ENCODE measurements at regions of chr4 and their contacts with region 1.

Region 1: DNA sequence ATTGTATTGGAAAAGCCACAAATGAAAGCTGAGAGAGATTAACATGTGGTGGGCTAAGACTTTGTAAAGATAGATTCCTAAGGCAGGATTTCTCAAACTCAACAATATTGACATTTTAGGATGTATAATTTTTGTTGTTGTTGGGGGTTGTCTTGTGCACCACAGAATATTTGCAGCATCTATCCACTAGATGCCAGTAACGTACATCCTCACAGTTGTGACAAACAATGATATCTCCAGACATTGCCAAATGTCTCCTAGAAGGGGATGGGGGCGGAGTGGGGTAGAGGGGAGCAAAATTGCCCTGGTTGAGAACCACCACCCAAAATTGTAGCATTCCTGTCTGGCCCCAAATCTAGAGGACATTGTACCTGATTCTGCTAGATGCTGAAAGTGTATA is 14.7 kb upstream of the CBR4 start:
- DNase-seq: peak; percentile 68
- ATAC-seq: peak; percentile 84
- H3K4me3 ChIP-seq: no peak overlapping the region
- H3K27ac ChIP-seq: no peak overlapping the region
- H3K4me1 ChIP-seq: peaks cover 7% of the 10 kb centered on the region; the same call in 1 of the 2 replicates
- H3K27me3 ChIP-seq: no peaks in the 10 kb centered on the region
- CTCF ChIP-seq: peak; percentile 78

Region 2: GRCh38 chr4:169069972-169070902 is 45.5 kb after region 1 on chr4:
- CTCF ChIA-PET with region 1: no interaction called
- POLR2A ChIA-PET with region 1: no interaction called
- intact Hi-C with region 1: loop called (anchors 5 kb)
- DNase-seq: peak; percentile 97
- ATAC-seq: peak; percentile 88
- H3K4me3 ChIP-seq: peak overlapping the region; percentile 47
- H3K27ac ChIP-seq: peak overlapping the region; percentile 99
- H3K4me1 ChIP-seq: peaks cover 32% of the 10 kb centered on the region
- H3K27me3 ChIP-seq: no peaks in the 10 kb centered on the region
- CTCF ChIP-seq: no peak

Region 3: DNA sequence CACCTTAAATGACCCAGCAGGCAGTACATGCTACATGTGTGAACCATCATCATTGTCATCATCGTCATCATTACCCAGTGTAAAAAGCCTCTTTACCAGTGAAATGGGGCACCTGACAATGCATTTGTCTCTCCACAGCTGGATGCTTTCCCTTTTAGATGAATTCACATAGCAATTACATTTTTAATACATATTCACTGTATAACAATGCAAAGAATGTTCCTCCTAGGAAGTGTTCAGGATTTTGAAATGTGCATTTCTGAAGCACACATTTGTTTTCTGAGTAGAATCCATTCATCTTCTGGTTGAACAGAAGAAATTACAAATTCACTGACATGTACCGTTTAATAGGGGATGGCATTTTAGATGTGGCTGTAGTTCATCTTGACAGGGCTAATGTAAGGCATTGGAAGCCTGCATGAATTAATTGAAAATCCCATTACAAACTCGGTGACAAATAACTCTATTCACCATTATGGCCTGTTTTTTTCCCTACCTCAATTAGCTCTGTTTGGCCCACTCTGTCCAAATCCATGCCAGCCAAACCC is 134.9 kb after region 1 on chr4:
- CTCF ChIA-PET with region 1: no interaction called
- POLR2A ChIA-PET with region 1: interaction called, 15 read pairs
- intact Hi-C with region 1: no loop called
- DNase-seq: peak; percentile 16
- ATAC-seq: peak; percentile 13; the same call in 1 of the 2 replicates
- H3K4me3 ChIP-seq: no peak overlapping the region
- H3K27ac ChIP-seq: no peak overlapping the region
- H3K4me1 ChIP-seq: peaks cover 9% of the 10 kb centered on the region; the same call in 1 of the 2 replicates
- H3K27me3 ChIP-seq: no peaks in the 10 kb centered on the region
- CTCF ChIP-seq: no peak

Region 4: DNA sequence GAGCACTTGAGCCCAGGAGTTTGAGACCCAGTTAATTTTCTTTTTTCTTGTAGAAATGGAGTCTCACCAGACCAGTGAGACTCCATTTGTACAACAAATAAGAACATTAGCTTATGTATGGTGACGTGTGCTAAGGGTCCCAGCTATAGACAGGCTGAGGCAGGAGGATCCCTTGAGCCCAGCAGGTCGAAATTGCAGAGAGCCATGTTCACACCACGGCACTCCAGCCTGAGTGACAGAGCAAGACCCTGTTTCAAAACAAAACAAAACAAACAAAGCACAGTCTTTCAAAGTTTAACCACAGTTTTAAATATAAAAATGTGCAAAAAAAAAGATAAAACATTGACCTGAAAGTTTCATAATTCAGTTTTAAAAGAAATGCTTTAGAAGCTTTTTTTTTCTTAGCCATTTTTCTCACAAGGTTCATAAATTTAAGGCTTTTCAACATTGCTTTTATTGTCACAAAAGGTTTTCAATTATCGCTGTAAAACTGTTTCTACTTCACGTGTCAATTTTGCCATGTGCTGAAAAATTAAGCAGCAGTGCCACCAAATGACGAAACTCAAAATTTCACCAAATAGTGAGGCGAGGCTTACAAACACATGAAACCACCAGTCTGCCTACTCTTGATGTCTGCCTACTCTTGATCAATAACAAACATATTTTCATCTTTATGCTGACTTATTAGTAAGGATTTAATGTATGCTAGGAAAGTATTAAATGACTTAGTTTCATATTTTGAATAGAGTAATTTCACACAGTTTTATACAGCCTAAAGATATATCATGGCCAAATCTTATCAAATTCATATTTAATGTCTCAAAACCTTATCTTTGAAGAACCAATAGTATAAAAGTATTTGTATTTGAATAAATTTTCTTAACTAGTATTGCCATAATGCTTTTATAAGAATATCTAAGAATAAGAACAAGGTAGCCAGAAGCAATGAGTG is 461.3 kb after region 1 on chr4:
- CTCF ChIA-PET with region 1: interaction called, 5 read pairs
- POLR2A ChIA-PET with region 1: no interaction called
- intact Hi-C with region 1: loop called (anchors 1 kb)
- DNase-seq: peak; percentile 74
- ATAC-seq: peak; percentile 54; the same call in 1 of the 2 replicates
- H3K4me3 ChIP-seq: peak overlapping the region; percentile 28
- H3K27ac ChIP-seq: no peak overlapping the region
- H3K4me1 ChIP-seq: peaks cover 18% of the 10 kb centered on the region
- H3K27me3 ChIP-seq: no peaks in the 10 kb centered on the region
- CTCF ChIP-seq: peak; percentile 75

Measured in PC-3 (cell line).